OCI-LY7 (cell line): ENCODE measurements at regions of chr3 and their contacts with region 1.

Region 1: GRCh38 chr3:140972833-140973232 is 31.2 kb downstream of the SLC25A36 start:
- DNase-seq: peak; percentile 19
- H3K4me3 ChIP-seq: no peak overlapping the region
- H3K27ac ChIP-seq: no peak overlapping the region
- H3K4me1 ChIP-seq: no peaks in the 10 kb centered on the region
- CTCF ChIP-seq: peak; percentile 78

Region 2: DNA sequence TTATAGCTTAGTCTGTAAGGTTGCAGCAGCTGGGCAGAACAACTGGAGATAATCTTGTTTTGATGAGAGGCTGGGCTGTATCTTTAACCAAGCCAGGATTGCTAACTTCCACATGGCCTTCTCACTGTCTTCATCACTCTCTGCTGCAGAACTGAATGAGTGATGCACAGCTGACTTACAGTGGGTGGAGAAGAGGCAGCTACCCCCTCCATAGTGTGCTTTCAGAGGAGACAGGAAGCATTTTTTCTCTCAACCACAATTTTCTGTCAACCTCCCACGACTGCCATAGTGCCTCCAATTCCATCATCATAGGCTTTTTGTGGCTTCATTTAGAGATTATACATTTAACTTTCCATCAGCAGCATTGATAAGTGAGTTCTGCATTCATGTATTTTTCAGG is 869.7 kb before region 1 on chr3:
- CTCF ChIA-PET with region 1: no interaction called
- POLR2A ChIA-PET with region 1: no interaction called
- intact Hi-C with region 1: no loop called
- DNase-seq: no peak
- H3K4me3 ChIP-seq: no peak overlapping the region
- H3K27ac ChIP-seq: no peak overlapping the region
- H3K4me1 ChIP-seq: no peaks in the 10 kb centered on the region
- CTCF ChIP-seq: no peak

Region 3: DNA sequence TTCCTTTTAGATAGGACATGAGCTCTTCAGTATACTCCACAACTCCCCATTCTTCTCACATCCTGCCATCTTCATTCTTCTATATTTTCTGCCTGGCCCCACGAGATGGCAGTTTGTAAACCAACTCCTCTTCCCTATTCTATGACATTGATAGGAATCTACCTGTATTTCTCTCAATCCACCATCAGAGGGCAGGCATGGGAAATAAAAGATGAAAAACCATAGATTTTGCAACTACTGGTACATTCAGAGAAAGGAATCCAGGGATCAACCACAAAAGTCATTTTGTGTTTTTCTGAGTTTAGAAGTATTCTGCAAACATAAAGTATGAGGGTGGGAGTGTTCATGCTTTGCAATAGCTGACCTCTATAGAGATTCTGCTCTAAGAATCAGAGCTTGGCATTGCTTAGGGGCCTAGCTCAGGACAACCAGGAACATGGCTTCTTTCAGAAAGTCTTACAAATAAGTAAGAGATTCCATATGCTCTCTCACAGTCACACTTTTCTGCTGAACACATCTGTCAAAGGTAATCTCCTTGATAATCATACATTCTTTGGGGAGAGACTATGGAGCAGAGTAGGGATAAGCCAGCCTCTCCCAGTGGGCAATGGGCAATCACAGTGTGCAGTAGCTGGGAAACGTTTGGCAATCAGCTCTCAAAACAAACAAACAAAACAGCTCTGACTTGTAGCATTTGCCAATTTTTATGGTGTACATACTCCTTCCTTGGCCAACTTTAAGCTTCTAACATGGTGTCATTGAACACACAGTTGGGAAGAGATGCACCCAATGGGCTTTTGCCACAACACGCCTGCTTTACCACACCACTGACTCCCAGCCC is 74.3 kb before region 1 on chr3:
- CTCF ChIA-PET with region 1: no interaction called
- POLR2A ChIA-PET with region 1: no interaction called
- intact Hi-C with region 1: loop called (anchors 5 kb)
- DNase-seq: peak; percentile 62
- H3K4me3 ChIP-seq: no peak overlapping the region
- H3K27ac ChIP-seq: no peak overlapping the region
- H3K4me1 ChIP-seq: no peaks in the 10 kb centered on the region
- CTCF ChIP-seq: peak; percentile 88

Region 4: DNA sequence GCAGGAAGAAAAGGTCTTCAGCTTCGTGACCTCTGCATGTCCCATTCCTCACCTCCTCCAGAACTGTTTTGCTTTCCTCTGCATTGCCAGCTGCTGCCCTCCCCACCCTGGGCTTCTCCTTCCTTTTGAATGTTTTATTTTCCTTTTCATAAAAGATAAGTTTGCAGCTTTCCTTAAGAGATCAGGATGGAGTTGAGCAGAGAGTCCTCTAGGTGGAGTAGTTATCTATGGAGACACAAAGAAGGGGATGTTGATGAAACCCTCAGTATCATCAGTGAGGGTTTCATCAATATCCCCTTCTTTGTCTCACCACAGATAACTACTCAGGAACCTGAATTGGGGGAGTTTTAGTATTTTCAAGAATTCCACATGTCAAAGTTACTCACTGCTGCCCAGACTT is 50.2 kb before region 1 on chr3:
- CTCF ChIA-PET with region 1: no interaction called
- POLR2A ChIA-PET with region 1: no interaction called
- intact Hi-C with region 1: loop called (anchors 5 kb)
- DNase-seq: peak; percentile 24
- H3K4me3 ChIP-seq: no peak overlapping the region
- H3K27ac ChIP-seq: no peak overlapping the region
- H3K4me1 ChIP-seq: no peaks in the 10 kb centered on the region
- CTCF ChIP-seq: peak; percentile 74

Region 5: GRCh38 chr3:141699897-141700296 is 727.1 kb after region 1 on chr3:
- CTCF ChIA-PET with region 1: no interaction called
- POLR2A ChIA-PET with region 1: no interaction called
- intact Hi-C with region 1: no loop called
- DNase-seq: no peak
- H3K4me3 ChIP-seq: no peak overlapping the region
- H3K27ac ChIP-seq: no peak overlapping the region
- H3K4me1 ChIP-seq: no peaks in the 10 kb centered on the region
- CTCF ChIP-seq: no peak